Activated B cell treated with CpG ODN at 0.5 μM for 24 hours (primary cell): ENCODE measurements at regions of chr10 and their contacts with region 1.

Region 1: DNA sequence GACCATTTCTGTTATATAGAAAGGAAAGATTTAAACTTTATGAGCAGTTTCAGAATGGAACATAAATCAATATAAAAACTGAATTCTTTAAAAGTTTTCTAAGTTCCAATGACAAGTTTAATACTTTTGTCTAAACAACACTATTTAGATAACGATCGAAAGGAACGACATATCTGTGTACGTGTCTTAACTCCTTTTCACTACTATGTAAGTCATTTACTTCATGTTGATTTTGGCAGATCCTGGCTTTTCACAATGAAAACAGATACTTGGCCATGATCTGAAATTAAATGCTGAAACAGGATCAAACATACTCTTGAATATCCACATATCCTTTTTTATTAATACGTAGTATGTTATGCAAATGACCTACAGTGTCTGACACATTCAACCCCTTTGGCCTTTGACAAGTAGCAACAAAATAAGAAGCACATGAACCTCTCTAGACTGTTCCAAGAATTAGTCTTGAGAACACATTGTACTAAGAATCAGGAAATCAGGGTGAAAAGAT is 41.9 kb downstream of the RNLS start:
- DNase-seq: no peak
- ATAC-seq: no peak
- H3K4me3 Mint-ChIP-seq: no peak overlapping the region
- H3K27ac Mint-ChIP-seq: no peak overlapping the region
- H3K4me1 Mint-ChIP-seq: no peaks in the 10 kb centered on the region
- H3K27me3 Mint-ChIP-seq: no peaks in the 10 kb centered on the region
- CTCF ChIP-seq: no peak

Region 2: GRCh38 chr10:87723500-87723899 is 817.7 kb before region 1 on chr10:
- CTCF ChIA-PET with region 1: no interaction called
- POLR2A ChIA-PET with region 1: no interaction called
- intact Hi-C with region 1: no loop called
- DNase-seq: no peak
- ATAC-seq: no peak
- H3K4me3 Mint-ChIP-seq: no peak overlapping the region
- H3K27ac Mint-ChIP-seq: no peak overlapping the region
- H3K4me1 Mint-ChIP-seq: peaks cover 1% of the 10 kb centered on the region
- H3K27me3 Mint-ChIP-seq: peaks cover 2% of the 10 kb centered on the region
- CTCF ChIP-seq: no peak

Region 3: GRCh38 chr10:88401671-88402347 is 139.4 kb before region 1 on chr10:
- CTCF ChIA-PET with region 1: no interaction called
- POLR2A ChIA-PET with region 1: no interaction called
- intact Hi-C with region 1: loop called (anchors 5 kb)
- DNase-seq: no peak
- ATAC-seq: no peak
- H3K4me3 Mint-ChIP-seq: no peak overlapping the region
- H3K27ac Mint-ChIP-seq: no peak overlapping the region
- H3K4me1 Mint-ChIP-seq: peaks cover 5% of the 10 kb centered on the region
- H3K27me3 Mint-ChIP-seq: no peaks in the 10 kb centered on the region
- CTCF ChIP-seq: no peak

Region 4: DNA sequence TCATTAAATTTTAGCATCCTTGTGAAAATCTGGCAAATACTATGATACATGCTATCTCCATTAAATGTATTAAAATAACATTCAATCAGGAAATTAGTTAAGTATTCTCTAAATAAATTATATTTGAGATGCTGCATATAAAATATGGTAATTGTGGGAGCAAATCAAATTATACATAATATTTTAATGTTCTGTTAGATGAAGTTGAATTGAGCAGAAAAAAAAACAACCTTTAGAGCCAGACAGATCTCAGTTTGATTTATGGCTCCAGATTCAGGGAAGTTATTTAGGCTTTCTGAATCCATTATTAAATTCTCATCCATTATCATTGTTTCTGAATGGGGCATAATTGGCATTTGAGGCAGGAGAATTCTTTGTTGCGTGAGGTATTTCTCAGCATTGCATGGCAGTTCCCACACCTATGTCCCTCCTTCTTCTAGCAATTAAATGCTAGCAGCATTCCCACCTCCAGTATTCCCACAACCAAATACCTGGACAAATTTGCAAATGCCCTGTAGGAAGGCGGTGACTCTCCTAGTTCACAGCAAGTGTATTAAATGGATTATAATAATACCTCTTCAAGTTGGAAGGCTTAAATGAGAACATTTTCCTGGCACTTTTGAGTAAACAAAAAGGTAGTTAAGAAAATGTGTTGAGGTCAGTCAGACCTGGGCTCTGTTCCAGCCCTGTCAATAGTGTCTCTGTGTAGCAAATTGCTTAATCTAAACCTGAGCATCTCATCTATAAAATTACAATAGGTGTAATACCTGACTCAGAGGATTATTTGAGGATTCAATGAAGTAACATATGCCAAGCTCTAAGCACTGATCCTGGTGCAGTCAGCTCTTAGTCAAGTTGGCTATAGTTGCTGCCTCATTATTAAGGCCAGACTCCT is 66.9 kb before region 1 on chr10:
- CTCF ChIA-PET with region 1: no interaction called
- POLR2A ChIA-PET with region 1: no interaction called
- intact Hi-C with region 1: no loop called
- DNase-seq: no peak
- ATAC-seq: no peak
- H3K4me3 Mint-ChIP-seq: no peak overlapping the region
- H3K27ac Mint-ChIP-seq: no peak overlapping the region
- H3K4me1 Mint-ChIP-seq: no peaks in the 10 kb centered on the region
- H3K27me3 Mint-ChIP-seq: no peaks in the 10 kb centered on the region
- CTCF ChIP-seq: no peak

Region 5: DNA sequence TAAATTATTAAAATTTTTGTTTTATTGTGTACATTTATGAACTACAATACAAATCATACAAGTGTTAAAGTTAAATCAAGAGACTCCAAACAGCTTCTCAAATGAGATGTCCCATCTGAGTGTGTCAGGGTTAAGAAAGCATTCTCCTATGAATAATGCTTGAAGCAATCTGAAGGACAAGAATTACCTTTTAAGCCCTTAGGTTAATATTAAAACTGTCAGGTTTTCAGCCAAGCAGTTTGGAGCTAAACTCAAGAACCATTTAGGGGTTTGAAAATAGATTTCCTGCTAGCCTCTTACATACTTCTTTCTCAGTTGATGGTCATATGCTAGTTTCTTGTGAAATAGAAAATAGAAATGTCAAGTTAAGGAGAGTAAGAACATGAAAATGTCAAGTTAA is 83.7 kb after region 1 on chr10:
- CTCF ChIA-PET with region 1: no interaction called
- POLR2A ChIA-PET with region 1: no interaction called
- intact Hi-C with region 1: no loop called
- DNase-seq: no peak
- ATAC-seq: no peak
- H3K4me3 Mint-ChIP-seq: no peak overlapping the region
- H3K27ac Mint-ChIP-seq: no peak overlapping the region
- H3K4me1 Mint-ChIP-seq: no peaks in the 10 kb centered on the region
- H3K27me3 Mint-ChIP-seq: no peaks in the 10 kb centered on the region
- CTCF ChIP-seq: no peak